ENCODE measurements at regions of chr12 and their contacts with region 1.

Region 1: GRCh38 chr12:125100551-125101434 is 35.6 kb downstream of the AACS start:
- DNase-seq: peak; percentile 68
- H3K4me3 Mint-ChIP-seq: peak overlapping the region; percentile 5
- H3K27ac Mint-ChIP-seq: peak overlapping the region; percentile 60
- H3K4me1 Mint-ChIP-seq: peaks cover 43% of the 10 kb centered on the region
- H3K27me3 Mint-ChIP-seq: no peaks in the 10 kb centered on the region
- CTCF ChIP-seq: no peak

Region 2: DNA sequence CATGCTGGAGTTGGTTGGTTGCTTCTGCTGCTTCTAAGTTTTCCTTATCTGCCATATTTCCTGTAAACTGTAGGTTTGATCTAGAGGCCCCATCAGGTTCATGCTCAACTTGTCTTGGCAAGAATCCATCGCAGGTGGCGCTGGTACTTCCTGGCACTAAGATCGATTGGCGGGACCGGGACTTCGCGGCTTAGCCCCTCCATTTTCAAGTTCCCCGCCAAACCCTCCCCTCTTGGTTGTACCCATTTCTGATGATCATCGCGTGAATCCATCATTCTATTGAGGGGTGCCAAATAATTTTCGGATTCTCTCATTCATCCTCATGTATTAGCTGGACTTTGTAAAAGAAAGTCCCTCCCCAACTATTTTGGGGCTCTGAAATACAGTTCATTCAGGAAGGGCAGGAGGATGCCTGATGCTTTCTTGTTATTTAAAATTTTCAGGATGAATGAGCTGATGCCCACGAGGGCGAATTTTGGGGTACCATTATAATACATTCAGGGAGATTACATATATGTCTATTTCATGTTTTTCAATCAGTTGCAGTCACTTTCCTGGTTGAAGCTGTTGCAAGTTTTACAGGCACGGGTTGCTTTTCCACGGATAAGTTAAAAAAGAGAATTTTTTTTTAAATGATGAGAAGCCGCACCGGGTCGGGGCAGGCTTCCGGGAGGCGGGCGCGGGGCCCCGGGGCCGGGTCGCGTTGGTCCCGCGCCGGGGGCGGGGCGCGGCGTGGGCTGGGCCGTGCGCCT is 107.7 kb before region 1 on chr12:
- CTCF ChIA-PET with region 1: no interaction called
- intact Hi-C with region 1: loop called (anchors 10 kb)
- DNase-seq: peak; percentile 92
- H3K4me3 Mint-ChIP-seq: peak overlapping the region; percentile 99
- H3K27ac Mint-ChIP-seq: peak overlapping the region; percentile 51
- H3K4me1 Mint-ChIP-seq: peaks cover 28% of the 10 kb centered on the region
- H3K27me3 Mint-ChIP-seq: no peaks in the 10 kb centered on the region
- CTCF ChIP-seq: peak; percentile 68

Region 3: GRCh38 chr12:125124318-125124966 is 23.6 kb after region 1 on chr12:
- CTCF ChIA-PET with region 1: no interaction called
- intact Hi-C with region 1: loop called (anchors 2 kb)
- DNase-seq: peak; percentile 72
- H3K4me3 Mint-ChIP-seq: peak overlapping the region; percentile 36
- H3K27ac Mint-ChIP-seq: peak overlapping the region; percentile 94
- H3K4me1 Mint-ChIP-seq: peaks cover 60% of the 10 kb centered on the region
- H3K27me3 Mint-ChIP-seq: no peaks in the 10 kb centered on the region
- CTCF ChIP-seq: no peak

Region 4: DNA sequence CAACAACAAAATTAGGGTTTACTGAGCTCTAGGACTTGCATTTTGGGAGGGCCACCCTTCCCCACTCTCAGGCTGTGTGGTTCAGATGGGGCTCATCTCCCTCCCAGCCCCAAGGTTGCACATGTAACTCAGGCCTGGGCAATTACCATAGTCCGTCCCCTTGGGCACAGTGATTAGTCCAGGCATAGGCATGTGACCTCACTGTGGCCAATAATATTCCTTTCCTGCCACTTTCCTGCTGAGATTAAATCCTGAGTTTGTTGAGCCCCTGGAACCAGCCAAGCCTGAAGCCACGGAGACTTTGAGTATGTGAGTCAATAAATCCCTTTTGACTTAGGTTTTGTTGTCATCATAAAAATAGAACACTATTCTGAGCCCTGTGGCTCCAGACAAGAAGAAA is 77.4 kb after region 1 on chr12:
- CTCF ChIA-PET with region 1: no interaction called
- intact Hi-C with region 1: loop called (anchors 5 kb)
- DNase-seq: no peak
- H3K4me3 Mint-ChIP-seq: no peak overlapping the region
- H3K27ac Mint-ChIP-seq: no peak overlapping the region
- H3K4me1 Mint-ChIP-seq: peaks cover 3% of the 10 kb centered on the region
- H3K27me3 Mint-ChIP-seq: peaks cover 58% of the 10 kb centered on the region
- CTCF ChIP-seq: no peak

Region 5: DNA sequence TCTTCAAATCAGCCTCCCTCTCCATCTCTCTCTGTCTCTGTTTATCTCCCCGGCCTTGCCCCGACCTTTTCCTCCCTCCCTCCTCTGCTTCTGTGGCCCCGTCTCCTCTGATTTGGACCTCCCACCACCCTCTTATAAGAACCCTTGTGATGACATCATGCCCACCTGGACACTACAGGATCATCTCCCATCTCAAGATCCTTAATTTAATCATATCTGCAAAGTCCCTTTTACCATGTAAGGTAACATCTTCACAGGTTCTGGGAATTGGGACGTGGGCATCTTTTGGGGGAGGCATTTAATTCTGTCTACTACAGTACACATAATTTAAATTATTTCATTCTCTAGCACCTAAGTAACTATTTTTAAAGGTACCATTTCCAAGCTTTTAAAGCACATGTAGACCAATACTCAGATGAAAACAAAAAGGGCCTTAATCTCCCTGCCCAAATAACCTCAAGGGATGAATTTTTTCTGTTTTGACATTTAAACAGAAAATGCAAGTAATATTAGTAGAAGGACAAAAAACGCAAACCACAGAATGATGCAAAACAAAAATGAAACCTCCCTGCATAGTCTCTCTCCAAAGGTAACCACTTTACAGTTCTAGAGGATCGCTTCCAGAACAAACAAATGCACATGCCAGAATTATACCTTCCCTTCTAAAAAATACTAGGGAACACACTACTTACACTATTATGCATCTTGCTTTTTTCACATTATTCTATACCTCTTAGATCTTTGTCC is 186.5 kb after region 1 on chr12:
- CTCF ChIA-PET with region 1: no interaction called
- intact Hi-C with region 1: no loop called
- DNase-seq: no peak
- H3K4me3 Mint-ChIP-seq: no peak overlapping the region
- H3K27ac Mint-ChIP-seq: no peak overlapping the region
- H3K4me1 Mint-ChIP-seq: no peaks in the 10 kb centered on the region
- H3K27me3 Mint-ChIP-seq: peaks cover 97% of the 10 kb centered on the region
- CTCF ChIP-seq: no peak

Region 6: GRCh38 chr12:125983093-125983783 is 882.4 kb after region 1 on chr12:
- CTCF ChIA-PET with region 1: no interaction called
- intact Hi-C with region 1: loop called (anchors 10 kb)
- DNase-seq: peak; percentile 93
- H3K4me3 Mint-ChIP-seq: peak overlapping the region; percentile 87
- H3K27ac Mint-ChIP-seq: peak overlapping the region; percentile 84
- H3K4me1 Mint-ChIP-seq: peaks cover 21% of the 10 kb centered on the region
- H3K27me3 Mint-ChIP-seq: no peaks in the 10 kb centered on the region
- CTCF ChIP-seq: no peak

Measured in Calu3 (cell line).